Common myeloid progenitor, CD34-positive (primary cell): ENCODE measurements at regions of chr2 and their contacts with region 1.

Region 1: DNA sequence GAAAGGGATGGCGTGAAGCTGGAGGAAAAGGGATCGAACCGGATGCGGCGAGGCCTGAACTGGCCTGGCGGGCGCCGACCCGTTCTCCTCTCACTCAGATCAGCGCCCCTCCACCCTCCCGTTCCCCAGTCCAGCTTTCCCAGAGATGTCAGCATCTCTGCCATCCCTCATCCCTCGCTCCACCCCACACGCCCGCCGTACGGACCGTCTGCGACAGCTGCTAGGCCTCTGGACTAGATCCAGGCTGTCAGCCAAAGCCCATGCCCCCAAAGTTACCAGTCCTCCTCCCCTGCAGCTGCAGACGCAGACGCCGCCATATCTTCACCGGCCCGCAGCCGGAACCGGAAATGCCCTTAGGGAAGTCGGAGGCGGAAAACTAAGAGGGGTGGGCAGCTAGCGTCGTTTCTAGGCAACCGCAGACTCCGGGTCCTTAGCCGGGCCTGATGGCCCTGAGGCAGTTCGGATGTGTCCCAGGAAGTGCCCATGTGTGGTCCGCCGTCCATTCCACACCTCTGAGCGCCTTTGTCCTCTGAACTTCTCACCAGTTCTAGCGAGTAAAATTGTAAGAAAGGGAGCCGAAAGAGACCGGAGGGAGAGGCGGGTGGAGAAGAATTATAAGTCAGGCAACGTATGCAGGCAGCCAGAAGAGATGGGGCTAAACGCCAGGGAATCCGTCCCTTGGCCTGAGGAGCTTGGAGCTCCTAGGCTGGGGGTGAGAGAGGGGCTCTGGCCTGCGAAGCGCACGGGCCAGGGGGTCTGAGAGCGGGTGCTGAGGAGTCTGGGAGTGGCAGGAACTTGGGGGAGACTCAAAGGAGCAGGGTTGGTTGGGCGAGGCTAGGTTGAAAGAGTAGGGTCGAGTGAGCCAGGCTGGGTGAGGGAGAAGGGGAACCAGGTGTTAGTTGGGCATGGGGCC is at the starts of genes RNF25 and STK36:
- DNase-seq: peak; percentile 82 to 92 (median 86)
- H3K4me3 ChIP-seq: peak within 1 kb of the TSS; percentile 54 to 97 (median 90)
- H3K27ac ChIP-seq: peak within 1 kb of the TSS; percentile 67 to 83
- H3K4me1 ChIP-seq: peaks cover 0 to 20% (median 14%) of the 10 kb centered on the region in 4 experiments
- H3K27me3 ChIP-seq: no peaks in the 10 kb centered on the region

Region 2: GRCh38 chr2:218691234-218691633 is 19.3 kb after region 1 on chr2:
- CTCF ChIA-PET with region 1: interaction called, 52 read pairs
- POLR2A ChIA-PET with region 1: no interaction called
- DNase-seq: no peak
- H3K4me3 ChIP-seq: no peak overlapping the region
- H3K27ac ChIP-seq: no peak overlapping the region
- H3K4me1 ChIP-seq: no peaks in the 10 kb centered on the region
- H3K27me3 ChIP-seq: no peaks in the 10 kb centered on the region